Activated T-helper 1 cell treated with anti-CD3 and anti-CD28 coated beads, Interleukin-12 subunit alpha, Interleukin-12 subunit beta, Interleukin-2, Interleukin-4 antibody, amounts not matched to agents 30 ng/mL and 10 ng/mL and 1 ng/mL, durations not matched to agents 14 hours and 24 hours and 36 hours (primary cell): ENCODE measurements at regions of chr3 and their contacts with region 1.

Region 1: DNA sequence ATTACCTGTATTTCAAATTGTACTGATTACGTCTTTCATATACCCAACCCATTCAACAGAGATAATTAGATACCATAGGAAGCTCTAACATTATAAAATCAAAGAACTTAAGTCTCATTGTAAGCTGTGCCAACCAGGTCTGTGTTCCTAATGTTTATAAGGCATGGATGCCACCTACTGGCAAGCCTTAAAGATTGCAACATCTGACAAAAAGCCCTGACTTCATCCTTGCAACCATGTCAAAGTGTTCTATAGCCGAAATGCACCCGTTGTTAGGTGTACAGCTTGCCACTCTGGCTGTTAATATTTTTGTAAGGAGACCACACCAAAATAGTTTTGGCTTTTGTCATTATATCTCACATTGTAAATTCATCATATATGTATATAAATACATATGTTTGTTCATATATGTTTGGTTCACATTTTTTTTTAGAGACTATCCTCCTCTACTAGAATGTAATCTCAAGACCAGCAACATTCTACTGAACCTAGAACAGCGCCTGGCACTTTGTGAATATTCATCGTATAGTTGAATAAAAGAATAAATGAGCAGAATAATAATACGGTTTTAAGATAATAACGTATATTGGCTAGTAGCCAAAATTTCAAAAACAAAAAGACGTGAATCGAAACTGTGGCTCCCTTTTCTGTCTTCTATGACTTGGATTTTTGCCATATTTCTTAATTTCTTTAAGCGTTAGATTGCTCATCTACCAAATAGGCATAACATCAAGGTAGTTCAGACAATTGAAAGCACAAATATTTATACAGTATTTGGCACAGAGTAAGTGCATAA is 258.1 kb downstream of the TBL1XR1 start:
- DNase-seq: peak; percentile 4
- H3K4me3 Mint-ChIP-seq: no peak overlapping the region
- H3K27ac Mint-ChIP-seq: no peak overlapping the region
- H3K4me1 Mint-ChIP-seq: no peaks in the 10 kb centered on the region
- H3K27me3 Mint-ChIP-seq: peaks cover 5% of the 10 kb centered on the region

Region 2: GRCh38 chr3:176514297-176514696 is 424.9 kb before region 1 on chr3:
- intact Hi-C with region 1: loop called (anchors 2 kb)
- DNase-seq: no peak
- H3K4me3 Mint-ChIP-seq: no peak overlapping the region
- H3K27ac Mint-ChIP-seq: no peak overlapping the region
- H3K4me1 Mint-ChIP-seq: no peaks in the 10 kb centered on the region
- H3K27me3 Mint-ChIP-seq: no peaks in the 10 kb centered on the region

Region 3: GRCh38 chr3:177220136-177220974 is 281.1 kb after region 1 on chr3:
- intact Hi-C with region 1: no loop called
- DNase-seq: no peak
- H3K4me3 Mint-ChIP-seq: no peak overlapping the region
- H3K27ac Mint-ChIP-seq: no peak overlapping the region
- H3K4me1 Mint-ChIP-seq: peaks cover 23% of the 10 kb centered on the region
- H3K27me3 Mint-ChIP-seq: no peaks in the 10 kb centered on the region